Tibial artery (tissue), 4 donors: ENCODE measurements at regions of chrX and their contacts with region 1.

Region 1: DNA sequence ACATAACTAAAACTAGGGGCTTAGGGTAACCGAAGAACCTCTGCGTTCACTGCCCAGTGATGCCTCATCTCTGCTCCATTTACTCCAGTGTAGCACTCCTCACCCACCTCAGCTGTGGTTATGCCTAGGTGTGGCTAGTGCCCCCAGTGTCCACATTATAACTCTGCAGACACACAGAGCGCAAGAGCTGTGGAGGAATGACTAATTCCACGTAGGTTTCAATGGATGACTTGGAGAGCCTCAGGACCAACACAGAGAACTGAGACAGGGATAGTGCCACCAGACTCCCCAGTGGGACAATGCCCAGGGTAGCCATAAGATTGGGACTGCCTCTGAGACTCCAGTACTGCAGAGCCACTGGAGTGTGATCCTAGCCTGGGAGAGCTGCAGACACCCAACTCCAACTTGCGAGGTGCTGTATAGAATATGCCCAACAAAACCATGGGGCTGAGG is 542.4 kb upstream of the DIPK2B start:
- DNase-seq: no peak
- H3K4me3 ChIP-seq: no peak overlapping the region
- H3K27ac ChIP-seq: no peak overlapping the region
- H3K4me1 ChIP-seq: no peaks in the 10 kb centered on the region
- H3K27me3 ChIP-seq: no peaks in the 10 kb centered on the region
- CTCF ChIP-seq: no peak

Region 2: DNA sequence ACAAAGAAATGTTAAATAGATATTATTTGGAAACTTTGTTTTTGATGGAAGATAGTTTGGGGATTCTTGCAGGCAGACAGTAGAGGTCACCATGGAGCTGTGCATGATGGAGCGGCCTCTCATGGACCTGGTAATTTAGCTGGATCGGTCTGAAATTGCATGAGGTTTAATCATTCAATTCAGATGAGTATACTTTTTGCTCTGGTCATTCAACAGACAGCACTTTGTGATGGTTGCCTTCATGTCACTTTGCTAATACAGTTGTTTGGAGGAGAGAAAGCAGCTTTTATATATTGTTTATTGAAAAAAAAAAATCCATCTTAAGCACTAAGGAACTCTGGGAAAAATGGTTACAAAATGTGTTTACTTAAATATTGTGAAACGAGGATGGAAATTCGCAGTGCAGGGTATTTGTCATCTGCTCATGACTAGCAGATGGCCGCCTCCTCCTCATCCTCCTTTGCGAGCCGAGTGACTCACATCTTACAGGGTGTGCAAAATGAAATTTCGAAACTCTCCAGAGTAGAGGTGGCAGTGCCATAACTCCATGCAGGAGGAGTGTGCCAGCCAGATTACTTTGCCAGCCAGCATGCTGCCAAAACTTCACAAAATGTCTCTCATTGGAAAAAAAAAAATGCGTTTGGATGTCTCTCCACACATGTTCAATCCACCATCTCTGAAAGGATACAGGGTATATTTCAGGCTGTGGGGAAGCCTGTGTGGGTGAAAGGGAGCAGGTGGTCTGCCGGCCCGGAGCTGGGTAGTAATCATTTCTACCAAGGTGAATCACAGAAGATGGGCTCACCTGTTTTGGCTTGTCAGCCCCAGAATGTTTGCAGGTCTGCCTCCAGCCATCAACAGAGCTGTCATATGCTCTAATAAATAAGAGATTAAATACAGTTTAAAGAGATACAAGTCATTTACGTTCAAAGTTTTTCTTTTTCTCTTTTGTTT is 227.6 kb before region 1 on chrX:
- intact Hi-C with region 1: loop called (anchors 10 kb)
- DNase-seq: peak; percentile 79 to 88
- H3K4me3 ChIP-seq: no peak overlapping the region
- H3K27ac ChIP-seq: peak overlapping the region; percentile 50 to 63
- H3K4me1 ChIP-seq: peaks cover 0 to 11% (median 2%) of the 10 kb centered on the region in 4 donors
- H3K27me3 ChIP-seq: no peaks in the 10 kb centered on the region
- CTCF ChIP-seq: peak; percentile 31 to 45